Heart left ventricle (tissue), 16 donors: ENCODE measurements at regions of chr17 and their contacts with region 1.

Region 1: GRCh38 chr17:47286198-47286914 is 32.7 kb downstream of the ITGB3 start:
- DNase-seq: no peak
- ATAC-seq: peak in 1 of 4 donors; percentile 42
- H3K4me3 ChIP-seq: no peak overlapping the region
- H3K27ac ChIP-seq: peak overlapping the region in 3 of 12 donors; percentile 6 to 51 (median 10)
- H3K4me1 ChIP-seq: peaks cover 0 to 10% (median 0%) of the 10 kb centered on the region in 12 donors
- H3K27me3 ChIP-seq: no peaks in the 10 kb centered on the region
- CTCF ChIP-seq: no peak
- POLR2A ChIP-seq: no peak

Region 2: DNA sequence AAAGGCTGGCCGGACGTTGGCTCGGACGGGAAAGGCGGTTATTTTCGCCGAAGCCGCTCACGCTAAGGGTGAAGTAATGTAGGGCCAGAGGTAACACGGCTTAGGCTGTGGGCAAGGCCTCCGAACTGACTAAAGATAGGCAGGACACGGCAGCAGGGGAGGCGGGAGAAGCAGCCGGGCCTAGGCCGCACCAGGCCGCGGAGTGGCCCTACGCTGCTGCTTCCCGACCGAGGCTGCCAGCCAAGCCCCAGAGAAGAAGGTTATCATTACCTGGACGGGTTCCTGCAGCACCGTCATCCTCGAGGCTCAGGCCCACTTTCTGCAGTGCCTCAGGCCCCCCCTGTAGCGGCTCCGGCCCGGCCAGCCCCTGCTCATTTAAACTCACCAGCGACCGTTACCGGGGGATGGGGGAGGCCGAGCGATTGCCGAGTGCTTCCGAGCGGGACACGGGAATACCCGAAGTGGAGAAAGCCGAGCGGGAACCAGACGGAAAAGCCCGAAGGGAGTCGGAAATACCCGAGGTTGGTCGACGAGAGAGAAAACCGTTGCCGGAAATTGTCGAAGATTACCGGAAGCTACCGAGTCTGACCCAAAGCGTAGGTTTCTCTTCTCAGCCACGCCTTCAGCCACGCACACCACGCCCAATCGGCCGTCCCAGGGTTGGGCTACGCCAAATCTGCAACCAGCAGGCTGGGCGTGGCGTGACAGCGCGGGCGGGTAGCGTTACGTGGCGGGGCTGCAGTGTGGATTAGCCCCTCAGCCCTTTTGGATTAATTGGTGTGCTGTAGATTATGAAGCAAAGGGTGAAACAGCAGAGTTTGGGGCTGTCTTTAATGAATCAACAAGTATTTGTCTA is 97.3 kb before region 1 on chr17 and contains the start of gene CDC27:
- intact Hi-C with region 1: no loop called
- DNase-seq: peak; percentile 99
- ATAC-seq: peak; percentile 97 to 98 (median 98)
- H3K4me3 ChIP-seq: peak within 1 kb of the TSS; percentile 61 to 94 (median 84)
- H3K27ac ChIP-seq: peak within 1 kb of the TSS; percentile 90 to 99 (median 97)
- H3K4me1 ChIP-seq: peaks cover 8 to 46% (median 35%) of the 10 kb centered on the region in 12 donors
- H3K27me3 ChIP-seq: no peaks in the 10 kb centered on the region
- CTCF ChIP-seq: peak in 1 of 12 donors; percentile 7
- POLR2A ChIP-seq: peak in 1 of 2 donors; percentile 46
- total RNA-seq, gene CDC27: 43.7 to 110 (median 79.7) TPM

Region 3: DNA sequence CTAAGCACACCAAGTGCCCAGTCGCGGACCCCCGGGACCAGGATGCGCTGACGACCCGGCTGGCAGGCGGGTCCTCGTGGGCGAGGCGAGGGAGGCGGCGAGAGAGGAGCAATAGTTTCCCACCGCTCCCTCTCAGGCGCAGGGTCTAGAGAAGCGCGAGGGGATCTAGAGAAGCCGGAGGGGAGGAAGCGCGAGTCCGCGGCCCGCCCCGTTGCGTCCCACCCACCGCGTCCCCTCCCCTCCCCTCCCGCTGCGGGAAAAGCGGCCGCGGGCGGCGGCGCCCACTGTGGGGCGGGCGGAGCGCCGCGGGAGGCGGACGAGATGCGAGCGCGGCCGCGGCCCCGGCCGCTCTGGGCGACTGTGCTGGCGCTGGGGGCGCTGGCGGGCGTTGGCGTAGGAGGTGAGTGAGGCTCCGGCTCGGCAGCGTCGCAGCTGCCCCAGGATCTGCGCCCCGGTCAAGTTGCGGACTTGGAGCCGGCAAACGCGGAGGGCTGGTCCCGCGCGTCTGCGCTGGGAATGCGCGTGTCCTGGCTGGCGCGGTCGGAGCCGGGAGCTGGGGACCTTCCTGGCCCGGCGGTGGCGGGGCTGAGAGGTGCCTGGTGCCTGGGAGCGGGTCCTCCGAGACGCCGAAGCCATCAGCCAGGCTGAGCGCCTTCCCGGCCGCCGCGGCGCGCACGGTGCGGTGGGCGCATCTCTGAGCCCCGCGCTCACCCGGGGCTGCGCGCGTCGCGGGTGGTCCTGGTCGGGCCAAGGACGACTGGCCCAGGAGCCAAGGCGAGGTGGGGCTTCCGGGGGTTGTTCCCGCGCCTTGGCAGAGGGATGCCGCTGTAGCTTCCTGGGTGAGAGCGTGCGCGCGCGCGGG is 32.6 kb before region 1 on chr17 and contains the start of gene ITGB3:
- intact Hi-C with region 1: loop called in 1 of 10 experiments (anchors 2 kb)
- DNase-seq: peak; percentile 80 to 87 (median 82)
- ATAC-seq: peak; percentile 59 to 98 (median 94)
- H3K4me3 ChIP-seq: peak within 1 kb of the TSS; percentile 61 to 88 (median 80)
- H3K27ac ChIP-seq: peak within 1 kb of the TSS in 11 of 12 donors; percentile 51 to 93 (median 79)
- H3K4me1 ChIP-seq: peaks cover 0 to 33% (median 9%) of the 10 kb centered on the region in 12 donors
- H3K27me3 ChIP-seq: peaks cover 0 to 25% (median 0%) of the 10 kb centered on the region in 9 donors
- CTCF ChIP-seq: peak in 11 of 12 donors; percentile 13 to 69 (median 49)
- POLR2A ChIP-seq: peak in 1 of 2 donors; percentile 13
- total RNA-seq, gene ITGB3: 2.6 to 14.8 (median 4.8) TPM

Region 4: GRCh38 chr17:47265983-47266541 is 20.3 kb before region 1 on chr17:
- intact Hi-C with region 1: loop called in 1 of 10 experiments (anchors 2 kb)
- DNase-seq: peak in 1 of 5 donors; percentile 65
- ATAC-seq: peak in 3 of 4 donors; percentile 55 to 77 (median 75)
- H3K4me3 ChIP-seq: no peak overlapping the region
- H3K27ac ChIP-seq: peak overlapping the region in 4 of 12 donors; percentile 30 to 65 (median 40)
- H3K4me1 ChIP-seq: peaks cover 0 to 24% (median 8%) of the 10 kb centered on the region in 12 donors
- H3K27me3 ChIP-seq: no peaks in the 10 kb centered on the region
- CTCF ChIP-seq: no peak
- POLR2A ChIP-seq: no peak

Region 5: GRCh38 chr17:47299219-47299910 is 13.0 kb after region 1 on chr17:
- intact Hi-C with region 1: no loop called
- DNase-seq: no peak
- ATAC-seq: no peak
- H3K4me3 ChIP-seq: no peak overlapping the region
- H3K27ac ChIP-seq: no peak overlapping the region
- H3K4me1 ChIP-seq: peaks cover 0 to 15% (median 7%) of the 10 kb centered on the region in 12 donors
- H3K27me3 ChIP-seq: no peaks in the 10 kb centered on the region
- CTCF ChIP-seq: no peak
- POLR2A ChIP-seq: no peak

Region 6: DNA sequence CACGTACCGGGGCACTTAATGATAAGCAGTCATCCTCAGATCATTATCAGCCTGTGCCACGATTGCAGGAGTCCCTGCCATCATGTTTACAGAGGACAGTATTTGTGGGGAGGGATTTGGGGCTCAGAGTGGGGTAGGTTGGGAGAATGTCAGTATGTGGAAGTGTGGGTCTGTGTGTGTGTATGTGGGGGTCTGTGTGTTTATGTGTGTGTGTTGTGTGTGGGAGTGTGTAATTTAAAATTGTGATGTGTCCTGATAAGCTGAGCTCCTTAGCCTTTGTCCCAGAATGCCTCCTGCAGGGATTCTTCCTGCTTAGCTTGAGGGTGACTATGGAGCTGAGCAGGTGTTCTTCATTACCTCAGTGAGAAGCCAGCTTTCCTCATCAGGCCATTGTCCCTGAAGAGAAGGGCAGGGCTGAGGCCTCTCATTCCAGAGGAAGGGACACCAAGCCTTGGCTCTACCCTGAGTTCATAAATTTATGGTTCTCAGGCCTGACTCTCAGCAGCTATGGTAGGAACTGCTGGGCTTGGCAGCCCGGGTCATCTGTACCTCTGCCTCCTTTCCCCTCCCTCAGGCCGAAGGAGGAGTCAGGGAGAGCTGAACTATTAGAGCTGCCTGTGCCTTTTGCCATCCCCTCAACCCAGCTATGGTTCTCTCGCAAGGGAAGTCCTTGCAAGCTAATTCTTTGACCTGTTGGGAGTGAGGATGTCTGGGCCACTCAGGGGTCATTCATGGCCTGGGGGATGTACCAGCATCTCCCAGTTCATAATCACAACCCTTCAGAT is 24.0 kb after region 1 on chr17:
- intact Hi-C with region 1: loop called in 1 of 10 experiments (anchors 1 kb)
- DNase-seq: no peak
- ATAC-seq: no peak
- H3K4me3 ChIP-seq: no peak overlapping the region
- H3K27ac ChIP-seq: no peak overlapping the region
- H3K4me1 ChIP-seq: peaks cover 0 to 17% (median 3%) of the 10 kb centered on the region in 12 donors
- H3K27me3 ChIP-seq: no peaks in the 10 kb centered on the region
- CTCF ChIP-seq: no peak
- POLR2A ChIP-seq: no peak

Region 7: GRCh38 chr17:47323382-47324222 is 37.2 kb after region 1 on chr17 and contains the start of gene EFCAB13:
- intact Hi-C with region 1: no loop called
- DNase-seq: peak; percentile 89 to 94 (median 91)
- ATAC-seq: peak; percentile 84 to 99 (median 98)
- H3K4me3 ChIP-seq: peak within 1 kb of the TSS; percentile 44 to 88 (median 69)
- H3K27ac ChIP-seq: peak within 1 kb of the TSS; percentile 66 to 97 (median 87)
- H3K4me1 ChIP-seq: peaks cover 0 to 7% (median 0%) of the 10 kb centered on the region in 12 donors
- H3K27me3 ChIP-seq: peaks cover 0 to 3% (median 0%) of the 10 kb centered on the region in 9 donors
- CTCF ChIP-seq: peak in 7 of 12 donors; percentile 22 to 54 (median 38)
- POLR2A ChIP-seq: peak in 1 of 2 donors; percentile 93
- total RNA-seq, gene EFCAB13: 0.63 to 6.1 (median 1.7) TPM

Region 8: DNA sequence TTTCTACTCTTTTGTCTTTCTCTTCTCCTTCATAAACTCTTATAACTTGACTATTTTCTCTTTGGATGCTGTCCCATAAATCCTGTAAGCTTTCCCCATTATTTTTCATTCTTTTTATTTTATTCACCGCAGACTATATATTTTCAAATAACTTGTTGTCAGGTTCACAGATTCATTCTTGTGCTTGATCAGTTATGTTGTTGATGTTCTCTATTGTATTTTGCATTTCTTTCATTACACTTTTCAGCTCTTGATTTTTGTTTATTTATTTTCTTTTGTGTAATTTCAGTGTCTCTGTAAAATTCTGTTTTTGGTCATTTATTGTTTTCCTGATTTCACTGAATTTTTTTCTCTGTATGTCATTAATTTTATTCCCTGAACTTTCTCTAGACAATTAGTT is 86.6 kb after region 1 on chr17:
- intact Hi-C with region 1: no loop called
- DNase-seq: no peak
- ATAC-seq: no peak
- H3K4me3 ChIP-seq: no peak overlapping the region
- H3K27ac ChIP-seq: no peak overlapping the region
- H3K4me1 ChIP-seq: peaks cover 0 to 4% (median 0%) of the 10 kb centered on the region in 12 donors
- H3K27me3 ChIP-seq: no peaks in the 10 kb centered on the region
- CTCF ChIP-seq: no peak
- POLR2A ChIP-seq: no peak